Dendritic cell treated with granulocyte-macrophage colony-stimulating factor and Interleukin-4, amounts not matched to agents 40 ng/mL and 50 ng/mL, for 4 days (primary cell): ENCODE measurements at regions of chr4 and their contacts with region 1.

Region 1: DNA sequence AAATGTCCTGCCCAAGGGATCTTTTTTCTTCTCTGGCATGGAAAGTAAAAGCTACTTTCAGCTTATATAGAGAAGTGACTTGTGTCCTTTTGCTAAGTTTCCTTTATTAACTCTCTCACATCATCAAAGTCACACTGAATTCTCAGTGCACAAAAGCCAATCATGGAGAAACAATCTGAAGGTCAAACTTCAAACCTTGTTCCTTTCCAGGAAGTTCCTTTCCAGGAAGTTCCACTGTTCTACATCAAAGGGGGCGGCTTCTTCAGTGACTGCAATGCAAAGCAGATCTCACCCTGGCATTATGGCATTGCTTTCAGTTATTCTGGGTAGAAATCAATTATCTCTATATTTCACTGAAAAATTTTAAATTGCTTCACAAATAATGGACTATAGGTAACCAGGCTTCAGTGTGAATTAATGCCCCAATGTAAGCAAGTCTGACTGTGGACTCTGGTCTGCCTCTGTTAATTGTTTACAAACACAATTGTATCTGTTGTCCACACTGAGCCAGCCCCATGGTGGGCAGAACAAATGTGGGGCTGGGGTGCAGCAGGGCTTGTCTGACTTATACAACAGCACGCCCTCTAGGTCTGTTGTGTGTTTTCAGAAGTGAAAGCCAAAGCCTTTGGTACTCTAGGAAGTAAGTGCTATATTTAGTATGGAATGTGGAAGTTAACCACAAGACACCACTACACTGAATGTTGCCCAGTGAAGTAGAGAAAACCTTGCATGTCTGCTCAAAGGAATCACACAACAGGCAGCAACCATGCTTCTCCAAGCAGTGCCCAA is 98.8 kb downstream of the CDS1 start:
- H3K4me3 Mint-ChIP-seq: peak overlapping the region; percentile 2
- H3K27ac Mint-ChIP-seq: peak overlapping the region; percentile 43
- H3K4me1 Mint-ChIP-seq: peaks cover 38% of the 10 kb centered on the region
- H3K27me3 Mint-ChIP-seq: no peaks in the 10 kb centered on the region

Region 2: GRCh38 chr4:83644677-83645659 is 1036.7 kb before region 1 on chr4:
- intact Hi-C with region 1: no loop called
- H3K4me3 Mint-ChIP-seq: no peak overlapping the region
- H3K27ac Mint-ChIP-seq: no peak overlapping the region
- H3K4me1 Mint-ChIP-seq: peaks cover 6% of the 10 kb centered on the region
- H3K27me3 Mint-ChIP-seq: peaks cover 24% of the 10 kb centered on the region

Region 3: GRCh38 chr4:84582302-84583000 is 99.2 kb before region 1 on chr4:
- intact Hi-C with region 1: loop called (anchors 5 kb)
- H3K4me3 Mint-ChIP-seq: peak overlapping the region; percentile 76
- H3K27ac Mint-ChIP-seq: peak overlapping the region; percentile 70
- H3K4me1 Mint-ChIP-seq: peaks cover 31% of the 10 kb centered on the region
- H3K27me3 Mint-ChIP-seq: peaks cover 50% of the 10 kb centered on the region